ENCODE measurements at regions of chr6 and their contacts with region 1.

Region 1: DNA sequence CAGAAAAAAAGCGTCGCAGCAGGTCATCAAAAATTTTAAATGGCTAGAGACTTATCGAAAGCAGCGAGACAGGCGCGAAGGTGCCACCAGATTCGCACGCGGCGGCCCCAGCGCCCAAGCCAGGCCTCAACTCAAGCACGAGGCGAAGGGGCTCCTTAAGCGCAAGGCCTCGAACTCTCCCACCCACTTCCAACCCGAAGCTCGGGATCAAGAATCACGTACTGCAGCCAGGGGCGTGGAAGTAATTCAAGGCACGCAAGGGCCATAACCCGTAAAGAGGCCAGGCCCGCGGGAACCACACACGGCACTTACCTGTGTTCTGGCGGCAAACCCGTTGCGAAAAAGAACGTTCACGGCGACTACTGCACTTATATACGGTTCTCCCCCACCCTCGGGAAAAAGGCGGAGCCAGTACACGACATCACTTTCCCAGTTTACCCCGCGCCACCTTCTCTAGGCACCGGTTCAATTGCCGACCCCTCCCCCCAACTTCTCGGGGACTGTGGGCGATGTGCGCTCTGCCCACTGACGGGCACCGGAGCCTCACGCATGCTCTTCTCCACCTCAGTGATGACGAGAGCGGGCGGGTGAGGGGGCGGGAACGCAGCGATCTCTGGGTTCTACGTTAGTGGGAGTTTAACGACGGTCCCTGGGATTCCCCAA is at the start of gene EEF1A1:
- DNase-seq: peak; percentile 100
- ATAC-seq: peak; percentile 75
- H3K4me3 Mint-ChIP-seq: peak within 1 kb of the TSS; percentile 87
- H3K27ac Mint-ChIP-seq: peak within 1 kb of the TSS; percentile 95
- H3K4me1 Mint-ChIP-seq: peaks cover 45% of the 10 kb centered on the region
- H3K27me3 Mint-ChIP-seq: no peaks in the 10 kb centered on the region
- total RNA-seq, gene EEF1A1: 7,075 to 7,486 TPM

Region 2: GRCh38 chr6:73451223-73452107 is 69.4 kb before region 1 on chr6:
- CTCF ChIA-PET with region 1: interaction called, 6 read pairs
- POLR2A ChIA-PET with region 1: interaction called, 40 read pairs
- DNase-seq: peak; percentile 62
- ATAC-seq: peak; percentile 63
- H3K4me3 Mint-ChIP-seq: peak overlapping the region; percentile 89
- H3K27ac Mint-ChIP-seq: peak overlapping the region; percentile 90
- H3K4me1 Mint-ChIP-seq: peaks cover 45% of the 10 kb centered on the region
- H3K27me3 Mint-ChIP-seq: no peaks in the 10 kb centered on the region

Region 3: GRCh38 chr6:73580247-73581149 is 59.7 kb after region 1 on chr6:
- CTCF ChIA-PET with region 1: interaction called, 22 read pairs
- POLR2A ChIA-PET with region 1: interaction called, 166 read pairs
- DNase-seq: peak; percentile 63
- ATAC-seq: peak; percentile 82
- H3K4me3 Mint-ChIP-seq: peak overlapping the region; percentile 57
- H3K27ac Mint-ChIP-seq: peak overlapping the region; percentile 89
- H3K4me1 Mint-ChIP-seq: peaks cover 25% of the 10 kb centered on the region
- H3K27me3 Mint-ChIP-seq: no peaks in the 10 kb centered on the region

Region 4: GRCh38 chr6:73585566-73586415 is 65.0 kb after region 1 on chr6:
- CTCF ChIA-PET with region 1: interaction called, 22 read pairs
- POLR2A ChIA-PET with region 1: interaction called, 166 read pairs
- DNase-seq: peak; percentile 70
- ATAC-seq: peak; percentile 81
- H3K4me3 Mint-ChIP-seq: peak overlapping the region; percentile 80
- H3K27ac Mint-ChIP-seq: peak overlapping the region; percentile 99
- H3K4me1 Mint-ChIP-seq: peaks cover 35% of the 10 kb centered on the region
- H3K27me3 Mint-ChIP-seq: no peaks in the 10 kb centered on the region

Region 5: GRCh38 chr6:73610444-73611275 is 89.8 kb after region 1 on chr6:
- CTCF ChIA-PET with region 1: interaction called, 157 read pairs
- POLR2A ChIA-PET with region 1: interaction called, 122 read pairs
- DNase-seq: no peak
- ATAC-seq: no peak
- H3K4me3 Mint-ChIP-seq: no peak overlapping the region
- H3K27ac Mint-ChIP-seq: no peak overlapping the region
- H3K4me1 Mint-ChIP-seq: no peaks in the 10 kb centered on the region
- H3K27me3 Mint-ChIP-seq: no peaks in the 10 kb centered on the region

Region 6: DNA sequence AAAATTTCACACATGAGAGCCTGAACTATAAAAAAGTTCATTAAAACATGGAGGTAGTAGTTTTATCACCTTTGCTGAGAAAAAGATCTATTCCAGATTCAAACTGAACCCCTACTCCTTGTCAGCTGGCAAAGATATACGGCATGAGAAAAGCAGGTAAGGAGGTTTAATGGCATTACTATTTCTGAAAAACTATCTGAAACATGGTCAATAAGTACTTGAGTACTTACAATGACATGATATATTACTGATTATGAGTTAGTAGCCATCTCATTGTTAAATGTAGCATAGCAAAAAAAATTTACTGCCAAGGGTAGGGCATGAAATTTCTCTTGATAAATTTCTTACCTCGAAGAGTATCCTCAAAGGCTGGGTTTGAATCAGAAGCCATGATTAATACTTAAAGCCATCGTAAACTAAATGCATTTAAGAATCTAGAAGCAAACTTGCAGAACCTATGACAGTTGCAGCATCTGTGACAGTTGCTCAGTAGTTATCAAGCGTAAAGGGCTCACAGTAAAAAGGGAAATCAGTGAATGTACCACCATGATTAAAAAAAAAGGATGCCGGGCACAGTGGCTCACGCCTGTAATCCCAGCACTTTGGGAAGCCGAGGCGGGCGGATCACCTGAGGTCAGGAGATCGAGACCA is 124.2 kb after region 1 on chr6:
- CTCF ChIA-PET with region 1: interaction called, 8 read pairs
- POLR2A ChIA-PET with region 1: interaction called, 10 read pairs
- DNase-seq: no peak
- ATAC-seq: peak; percentile 35
- H3K4me3 Mint-ChIP-seq: peak overlapping the region; percentile 75
- H3K27ac Mint-ChIP-seq: peak overlapping the region; percentile 27
- H3K4me1 Mint-ChIP-seq: peaks cover 10% of the 10 kb centered on the region
- H3K27me3 Mint-ChIP-seq: no peaks in the 10 kb centered on the region

Region 7: GRCh38 chr6:73653571-73654424 is 133.0 kb after region 1 on chr6 and contains the start of gene SLC17A5:
- CTCF ChIA-PET with region 1: interaction called, 32 read pairs
- POLR2A ChIA-PET with region 1: interaction called, 85 read pairs
- DNase-seq: peak; percentile 93
- ATAC-seq: peak; percentile 91
- H3K4me3 Mint-ChIP-seq: peak within 1 kb of the TSS; percentile 99
- H3K27ac Mint-ChIP-seq: peak within 1 kb of the TSS; percentile 97
- H3K4me1 Mint-ChIP-seq: peaks cover 22% of the 10 kb centered on the region
- H3K27me3 Mint-ChIP-seq: no peaks in the 10 kb centered on the region
- total RNA-seq, gene SLC17A5: 5.0 to 5.7 TPM